CD8-positive, alpha-beta T cell (primary cell): ENCODE measurements at regions of chr5 and their contacts with region 1.

Region 1: DNA sequence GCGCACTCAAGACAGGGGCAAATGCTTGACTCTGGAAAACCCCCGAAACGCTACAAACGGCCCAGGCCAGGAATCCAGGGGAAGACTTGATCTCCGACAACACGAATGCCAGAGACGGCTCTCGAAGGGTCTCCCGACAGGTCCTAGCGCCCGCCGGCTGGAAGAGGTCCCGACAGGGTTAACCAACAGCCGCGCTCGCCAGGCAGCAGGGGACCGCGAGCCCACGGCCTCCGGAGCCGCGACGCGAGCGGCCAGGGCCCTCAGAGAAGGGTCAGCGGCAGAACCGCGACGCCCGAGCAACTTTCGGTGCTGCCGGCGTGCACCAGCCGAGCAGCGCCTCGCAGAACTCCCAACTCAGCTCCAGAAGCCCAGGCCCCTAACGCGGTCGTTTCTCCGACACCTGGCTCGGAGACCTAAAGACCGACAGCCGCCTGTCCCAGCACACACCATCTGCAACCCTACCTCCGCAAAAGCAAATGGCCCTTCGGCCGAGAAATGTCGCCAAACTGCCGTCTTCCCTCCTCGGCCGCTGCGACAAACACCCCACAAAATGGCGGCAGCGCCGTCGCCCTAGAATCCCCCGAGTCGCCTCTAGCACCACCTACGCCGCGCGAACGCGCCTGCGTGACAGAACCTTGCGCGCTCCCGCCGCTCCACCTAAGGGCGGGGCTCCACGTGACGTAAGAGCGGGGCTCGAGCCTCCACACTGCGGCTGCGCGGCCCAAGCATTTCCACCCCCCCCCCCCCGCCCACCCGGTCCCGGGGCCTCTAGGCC is at the start of gene CLK4:
- DNase-seq: peak; percentile 94 to 98 (median 97)
- ATAC-seq: peak; percentile 86
- H3K4me3 ChIP-seq: peak within 1 kb of the TSS; percentile 84 to 94
- H3K4me3 Mint-ChIP-seq: peak within 1 kb of the TSS; percentile 99
- H3K27ac ChIP-seq: peak within 1 kb of the TSS; percentile 91 to 97
- H3K27ac Mint-ChIP-seq: peak within 1 kb of the TSS; percentile 100
- H3K4me1 ChIP-seq: peaks cover 34% of the 10 kb centered on the region
- H3K4me1 Mint-ChIP-seq: peaks cover 38% of the 10 kb centered on the region
- H3K27me3 ChIP-seq: no peaks in the 10 kb centered on the region
- H3K27me3 Mint-ChIP-seq: no peaks in the 10 kb centered on the region
- CTCF ChIP-seq: no peak
- total RNA-seq, gene CLK4: 104 to 106 TPM

Region 2: GRCh38 chr5:178204182-178204894 is 422.3 kb before region 1 on chr5 and contains the start of gene HNRNPAB:
- CTCF ChIA-PET with region 1: no interaction called
- POLR2A ChIA-PET with region 1: no interaction called
- intact Hi-C with region 1: loop called in 1 of 2 experiments (anchors 1 kb)
- DNase-seq: peak; percentile 92 to 99 (median 96)
- ATAC-seq: peak; percentile 75
- H3K4me3 ChIP-seq: peak within 1 kb of the TSS; percentile 65 to 73
- H3K4me3 Mint-ChIP-seq: peak within 1 kb of the TSS; percentile 98
- H3K27ac ChIP-seq: peak within 1 kb of the TSS; percentile 60 to 80
- H3K27ac Mint-ChIP-seq: peak within 1 kb of the TSS; percentile 98
- H3K4me1 ChIP-seq: peaks cover 28% of the 10 kb centered on the region
- H3K4me1 Mint-ChIP-seq: peaks cover 41% of the 10 kb centered on the region
- H3K27me3 ChIP-seq: no peaks in the 10 kb centered on the region
- H3K27me3 Mint-ChIP-seq: no peaks in the 10 kb centered on the region
- CTCF ChIP-seq: no peak
- total RNA-seq, gene HNRNPAB: 67.3 to 76.2 TPM

Region 3: GRCh38 chr5:178732281-178732680 is 105.6 kb after region 1 on chr5:
- CTCF ChIA-PET with region 1: no interaction called
- POLR2A ChIA-PET with region 1: interaction called, 4 read pairs
- intact Hi-C with region 1: loop called (anchors 1 kb)
- DNase-seq: no peak
- ATAC-seq: no peak
- H3K4me3 ChIP-seq: no peak overlapping the region
- H3K4me3 Mint-ChIP-seq: peak overlapping the region; percentile 8
- H3K27ac ChIP-seq: no peak overlapping the region
- H3K27ac Mint-ChIP-seq: no peak overlapping the region
- H3K4me1 ChIP-seq: peaks cover 4% of the 10 kb centered on the region
- H3K4me1 Mint-ChIP-seq: peaks cover 14% of the 10 kb centered on the region
- H3K27me3 ChIP-seq: no peaks in the 10 kb centered on the region
- H3K27me3 Mint-ChIP-seq: no peaks in the 10 kb centered on the region
- CTCF ChIP-seq: no peak

Region 4: GRCh38 chr5:179060116-179061008 is 433.7 kb after region 1 on chr5 and contains the start of gene ZNF354C:
- CTCF ChIA-PET with region 1: no interaction called
- POLR2A ChIA-PET with region 1: no interaction called
- intact Hi-C with region 1: loop called in 1 of 2 experiments (anchors 2 kb)
- DNase-seq: peak; percentile 64 to 92 (median 88)
- ATAC-seq: peak; percentile 98
- H3K4me3 ChIP-seq: peak within 1 kb of the TSS; percentile 76 to 80
- H3K4me3 Mint-ChIP-seq: peak within 1 kb of the TSS; percentile 95
- H3K27ac ChIP-seq: peak within 1 kb of the TSS; percentile 64 to 76
- H3K27ac Mint-ChIP-seq: peak within 1 kb of the TSS; percentile 92
- H3K4me1 ChIP-seq: peaks cover 15% of the 10 kb centered on the region
- H3K4me1 Mint-ChIP-seq: peaks cover 30% of the 10 kb centered on the region
- H3K27me3 ChIP-seq: no peaks in the 10 kb centered on the region
- H3K27me3 Mint-ChIP-seq: peaks cover 8% of the 10 kb centered on the region
- CTCF ChIP-seq: no peak
- total RNA-seq, gene ZNF354C: 2.4 to 2.7 TPM

Region 5: DNA sequence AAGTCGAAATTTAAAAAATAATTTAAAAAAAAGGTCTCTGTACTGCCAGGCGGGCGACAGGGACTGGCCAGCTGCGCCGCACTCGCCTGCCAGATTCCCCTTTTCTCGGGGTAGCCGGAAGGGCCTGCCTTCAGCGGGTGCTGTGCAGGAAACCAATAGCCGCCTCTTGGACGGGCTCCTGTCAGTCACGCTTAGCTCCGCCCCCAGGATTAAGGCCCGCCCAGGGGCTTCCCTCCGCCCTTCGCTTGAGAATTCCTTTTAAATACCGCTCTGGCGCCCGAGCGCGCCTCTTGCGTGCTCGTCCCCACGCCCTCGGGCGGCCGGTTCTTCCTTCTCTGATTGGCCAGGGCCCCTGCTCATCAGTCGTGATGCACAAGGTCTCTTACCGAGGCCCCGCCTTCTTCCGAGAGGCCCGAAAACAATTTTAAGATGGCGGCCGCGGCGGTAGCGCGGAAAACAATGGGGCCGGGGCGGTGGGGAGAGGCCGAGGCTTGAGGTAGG is 1105.8 kb after region 1 on chr5 and contains the start of gene MAML1:
- CTCF ChIA-PET with region 1: no interaction called
- POLR2A ChIA-PET with region 1: no interaction called
- intact Hi-C with region 1: loop called in 1 of 2 experiments (anchors 2 kb)
- DNase-seq: peak; percentile 98 to 100 (median 99)
- ATAC-seq: peak; percentile 93
- H3K4me3 ChIP-seq: peak within 1 kb of the TSS; percentile 52 to 76
- H3K4me3 Mint-ChIP-seq: peak within 1 kb of the TSS; percentile 95
- H3K27ac ChIP-seq: peak within 1 kb of the TSS; percentile 62 to 91
- H3K27ac Mint-ChIP-seq: peak within 1 kb of the TSS; percentile 97
- H3K4me1 ChIP-seq: peaks cover 28% of the 10 kb centered on the region
- H3K4me1 Mint-ChIP-seq: peaks cover 40% of the 10 kb centered on the region
- H3K27me3 ChIP-seq: no peaks in the 10 kb centered on the region
- H3K27me3 Mint-ChIP-seq: no peaks in the 10 kb centered on the region
- CTCF ChIP-seq: no peak
- total RNA-seq, gene MAML1: 23.4 to 26.9 TPM